GM12878 (cell line): ENCODE measurements at regions of chr21 and their contacts with region 1.

Region 1: DNA sequence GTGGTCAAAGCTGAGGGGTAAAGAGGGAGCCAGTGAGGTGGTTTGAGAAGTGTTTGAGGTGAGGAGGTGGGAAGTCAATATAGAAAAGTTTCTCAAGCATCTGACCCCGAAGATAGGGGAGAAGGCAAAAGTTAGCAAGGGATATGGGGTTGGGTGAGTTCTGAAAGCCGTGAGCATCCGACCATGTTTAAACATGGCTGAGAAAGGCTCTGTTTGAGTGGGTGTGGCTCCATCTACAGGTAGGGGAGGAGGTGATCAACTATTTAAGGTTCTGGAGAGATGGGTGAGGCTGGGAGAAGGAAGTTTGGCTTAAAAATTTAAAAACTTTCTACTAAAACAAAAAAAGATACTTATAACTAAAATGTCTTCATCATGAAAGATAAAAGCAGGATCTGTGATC is 273.8 kb downstream of the KCNJ6 start:
- DNase-seq: no peak
- ATAC-seq: peak; percentile 94
- H3K4me3 ChIP-seq: no peak overlapping the region
- H3K27ac ChIP-seq: no peak overlapping the region
- H3K4me1 ChIP-seq: no peaks in the 10 kb centered on the region
- H3K27me3 ChIP-seq: 0 out of 4 replicates have a peak, but pooled peaks cover 0 to under 1% of the 10 kb centered on the region in 2 experiments
- CTCF ChIP-seq: peak; percentile 36 to 65 (median 45); a peak in 4 of 6 replicates
- EP300 ChIP-seq: no peak
- POLR2A ChIP-seq: no peak
- RAD21 ChIP-seq: peak; percentile 75

Region 2: GRCh38 chr21:37619464-37619974 is 23.0 kb before region 1 on chr21:
- CTCF ChIA-PET with region 1: interaction called, 8 read pairs
- POLR2A ChIA-PET with region 1: no interaction called
- RAD21 ChIA-PET with region 1: interaction called, 9 read pairs
- SMC1A ChIA-PET with region 1: interaction called, 20 read pairs
- in situ Hi-C with region 1: no loop called
- intact Hi-C with region 1: no loop called
- DNase-seq: no peak
- ATAC-seq: peak; percentile 25; the same call in 2 of the 3 replicates
- H3K4me3 ChIP-seq: no peak overlapping the region
- H3K27ac ChIP-seq: no peak overlapping the region
- H3K4me1 ChIP-seq: peaks cover 3% of the 10 kb centered on the region; the same call in 1 of the 2 replicates
- H3K27me3 ChIP-seq: no peaks in the 10 kb centered on the region
- CTCF ChIP-seq: peak in 1 of 3 experiments; percentile 15; a peak in 1 of 6 replicates
- EP300 ChIP-seq: no peak
- POLR2A ChIP-seq: no peak
- RAD21 ChIP-seq: no peak

Region 3: GRCh38 chr21:37675202-37675801 is 32.8 kb after region 1 on chr21:
- CTCF ChIA-PET with region 1: interaction called, 12 read pairs
- POLR2A ChIA-PET with region 1: no interaction called
- RAD21 ChIA-PET with region 1: no interaction called
- SMC1A ChIA-PET with region 1: no interaction called
- in situ Hi-C with region 1: no loop called
- intact Hi-C with region 1: no loop called
- DNase-seq: no peak
- ATAC-seq: peak; percentile 95
- H3K4me3 ChIP-seq: no peak overlapping the region
- H3K27ac ChIP-seq: no peak overlapping the region
- H3K4me1 ChIP-seq: no peaks in the 10 kb centered on the region; the same call in 1 of the 2 replicates
- H3K27me3 ChIP-seq: no peaks in the 10 kb centered on the region
- CTCF ChIP-seq: peak; percentile 82 to 90 (median 83)
- EP300 ChIP-seq: no peak
- POLR2A ChIP-seq: no peak
- RAD21 ChIP-seq: peak; percentile 42; the same call in 1 of the 2 replicates

Region 4: DNA sequence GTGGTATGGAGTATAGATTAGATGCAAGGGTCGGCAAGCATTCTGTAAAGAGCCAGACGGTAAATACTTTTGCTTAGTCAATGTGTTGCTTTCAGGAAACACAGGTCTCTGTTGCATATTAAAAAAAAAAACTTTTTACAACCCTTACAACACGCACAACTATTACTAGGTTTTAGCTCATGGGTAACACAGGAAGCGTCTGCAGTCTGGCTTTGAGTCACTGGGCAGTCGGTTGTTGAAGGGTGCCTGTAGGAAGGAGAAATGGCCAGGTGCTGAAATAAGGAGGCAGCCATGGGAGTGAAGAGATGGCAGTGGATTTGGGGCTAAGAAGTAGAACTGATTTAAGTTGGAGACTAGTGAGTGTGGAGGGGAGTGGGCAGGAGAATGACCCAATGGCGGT is 81.7 kb after region 1 on chr21:
- CTCF ChIA-PET with region 1: no interaction called
- POLR2A ChIA-PET with region 1: no interaction called
- RAD21 ChIA-PET with region 1: no interaction called
- SMC1A ChIA-PET with region 1: no interaction called
- in situ Hi-C with region 1: no loop called
- intact Hi-C with region 1: no loop called
- DNase-seq: no peak
- ATAC-seq: no peak
- H3K4me3 ChIP-seq: no peak overlapping the region
- H3K27ac ChIP-seq: no peak overlapping the region
- H3K4me1 ChIP-seq: no peaks in the 10 kb centered on the region
- H3K27me3 ChIP-seq: no peaks in the 10 kb centered on the region
- CTCF ChIP-seq: no peak
- EP300 ChIP-seq: no peak
- POLR2A ChIP-seq: no peak
- RAD21 ChIP-seq: no peak